ENCODE measurements at regions of chr20 and their contacts with region 1.

Region 1: DNA sequence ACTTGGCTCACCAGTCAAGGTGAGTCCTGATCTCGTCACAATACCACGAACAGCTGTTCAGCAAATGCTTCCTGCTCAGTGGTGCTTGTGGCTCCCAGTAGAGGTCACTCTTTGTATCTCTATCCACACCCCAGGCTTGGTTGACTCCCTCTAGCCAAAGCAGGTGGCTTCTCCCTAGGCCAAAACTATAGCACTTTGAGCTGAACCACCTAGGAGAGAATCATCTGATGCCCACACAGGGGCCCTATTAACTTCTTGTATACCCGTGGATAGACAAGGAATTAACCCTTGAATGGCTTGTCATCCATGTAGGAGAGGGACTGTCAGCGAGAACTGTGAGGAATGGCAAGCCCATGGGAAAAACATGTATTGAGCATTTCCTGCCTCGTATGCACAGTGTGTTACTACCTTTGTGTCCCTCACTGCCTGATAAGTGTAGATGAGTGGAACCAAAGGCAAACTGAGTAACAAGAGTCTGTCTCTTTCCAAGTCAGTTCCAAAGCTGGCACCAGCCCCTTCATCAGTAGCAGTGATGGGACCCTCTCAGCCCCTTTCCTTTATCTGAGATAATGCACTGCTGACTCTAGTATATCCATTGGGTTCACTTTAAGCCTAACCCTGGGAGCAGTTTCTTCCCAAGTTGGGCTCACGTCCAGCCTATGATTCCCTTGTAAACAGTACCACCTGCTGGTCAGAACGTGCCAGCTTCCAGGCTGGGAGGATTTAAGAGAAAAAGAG is 42.5 kb downstream of the EIF2S2 start:
- DNase-seq: peak; percentile 69
- H3K4me3 ChIP-seq: no peak overlapping the region
- H3K27ac ChIP-seq: no peak overlapping the region
- H3K27me3 ChIP-seq: no peaks in the 10 kb centered on the region
- CTCF ChIP-seq: peak; percentile 92

Region 2: GRCh38 chr20:33037456-33037855 is 1032.1 kb before region 1 on chr20:
- CTCF ChIA-PET with region 1: no interaction called
- POLR2A ChIA-PET with region 1: no interaction called
- DNase-seq: no peak
- H3K4me3 ChIP-seq: no peak overlapping the region
- H3K27ac ChIP-seq: no peak overlapping the region
- H3K27me3 ChIP-seq: no peaks in the 10 kb centered on the region
- CTCF ChIP-seq: no peak

Region 3: GRCh38 chr20:33803921-33804337 is 265.6 kb before region 1 on chr20:
- CTCF ChIA-PET with region 1: no interaction called
- POLR2A ChIA-PET with region 1: no interaction called
- DNase-seq: peak; percentile 43
- H3K4me3 ChIP-seq: no peak overlapping the region
- H3K27ac ChIP-seq: peak overlapping the region; percentile 59
- H3K27me3 ChIP-seq: no peaks in the 10 kb centered on the region
- CTCF ChIP-seq: no peak

Region 4: DNA sequence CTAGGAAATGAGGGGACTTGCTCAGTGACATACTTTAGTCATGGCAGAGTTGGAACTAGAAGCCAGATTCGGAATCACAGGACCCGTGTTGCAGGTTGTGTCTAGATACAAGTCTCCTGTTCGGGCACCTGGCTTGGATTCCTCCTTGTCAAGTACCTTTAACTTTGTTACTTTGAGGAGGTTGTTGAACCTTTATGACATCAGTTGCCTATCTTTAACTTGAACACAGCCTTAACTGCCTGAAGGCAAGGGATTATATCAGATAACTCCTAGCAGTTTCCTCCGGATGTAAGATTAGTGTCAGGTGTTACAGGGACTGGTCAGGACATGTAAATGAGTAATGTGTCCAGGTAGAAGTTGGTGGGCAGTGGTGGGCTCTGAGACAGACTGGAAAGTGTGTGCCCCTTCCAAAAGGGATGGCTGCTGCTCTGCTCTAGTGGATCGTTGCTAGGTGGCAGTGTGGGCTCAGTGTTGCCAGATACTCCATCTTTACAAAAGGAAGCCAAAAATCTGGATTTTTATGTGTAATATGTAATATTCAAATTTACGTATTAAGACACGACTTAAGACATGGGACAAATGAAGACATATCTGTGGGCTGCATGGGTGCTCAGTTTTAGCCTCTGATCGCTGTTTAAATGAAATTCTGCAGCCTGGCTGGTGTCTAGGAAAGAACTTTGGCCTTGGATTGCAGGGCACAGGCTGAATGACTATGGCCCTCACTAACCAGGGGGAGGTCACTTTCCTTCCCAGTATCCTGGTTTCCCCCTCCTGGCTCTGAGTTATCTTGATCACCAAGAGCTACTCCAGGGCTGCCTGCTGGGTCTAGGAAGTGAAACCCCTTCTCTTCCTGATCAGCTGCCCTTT is 231.3 kb before region 1 on chr20:
- CTCF ChIA-PET with region 1: interaction called, 14 read pairs
- POLR2A ChIA-PET with region 1: no interaction called
- DNase-seq: no peak
- H3K4me3 ChIP-seq: no peak overlapping the region
- H3K27ac ChIP-seq: no peak overlapping the region
- H3K27me3 ChIP-seq: no peaks in the 10 kb centered on the region
- CTCF ChIP-seq: no peak

Region 5: GRCh38 chr20:33915726-33916331 is 153.7 kb before region 1 on chr20:
- CTCF ChIA-PET with region 1: interaction called, 10 read pairs
- POLR2A ChIA-PET with region 1: no interaction called
- DNase-seq: no peak
- H3K4me3 ChIP-seq: no peak overlapping the region
- H3K27ac ChIP-seq: no peak overlapping the region
- H3K27me3 ChIP-seq: peaks cover 4% of the 10 kb centered on the region
- CTCF ChIP-seq: peak; percentile 38

Region 6: DNA sequence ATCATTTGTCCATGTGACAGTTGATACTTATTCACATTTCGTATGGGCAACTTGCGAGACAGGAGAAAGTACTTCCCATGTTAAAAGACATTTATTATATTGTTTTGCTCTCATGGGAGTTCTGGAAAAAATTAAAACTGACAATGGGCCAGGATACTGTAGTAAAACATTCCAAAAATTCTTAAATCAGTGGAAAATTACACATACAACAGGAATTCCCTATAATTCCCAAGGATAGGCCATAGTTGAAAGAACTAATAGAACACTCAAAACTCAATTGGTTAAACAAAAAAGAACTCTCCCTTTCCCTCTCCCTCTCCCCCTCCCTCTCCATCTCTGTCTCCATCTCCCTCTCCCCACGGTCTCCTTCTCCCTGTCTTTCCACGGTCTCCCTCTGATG is 62.0 kb after region 1 on chr20:
- CTCF ChIA-PET with region 1: no interaction called
- POLR2A ChIA-PET with region 1: no interaction called
- DNase-seq: no peak
- H3K4me3 ChIP-seq: no peak overlapping the region
- H3K27ac ChIP-seq: no peak overlapping the region
- H3K27me3 ChIP-seq: peaks cover 5% of the 10 kb centered on the region
- CTCF ChIP-seq: no peak